ENCODE measurements at regions of chr19 and their contacts with region 1.

Region 1: DNA sequence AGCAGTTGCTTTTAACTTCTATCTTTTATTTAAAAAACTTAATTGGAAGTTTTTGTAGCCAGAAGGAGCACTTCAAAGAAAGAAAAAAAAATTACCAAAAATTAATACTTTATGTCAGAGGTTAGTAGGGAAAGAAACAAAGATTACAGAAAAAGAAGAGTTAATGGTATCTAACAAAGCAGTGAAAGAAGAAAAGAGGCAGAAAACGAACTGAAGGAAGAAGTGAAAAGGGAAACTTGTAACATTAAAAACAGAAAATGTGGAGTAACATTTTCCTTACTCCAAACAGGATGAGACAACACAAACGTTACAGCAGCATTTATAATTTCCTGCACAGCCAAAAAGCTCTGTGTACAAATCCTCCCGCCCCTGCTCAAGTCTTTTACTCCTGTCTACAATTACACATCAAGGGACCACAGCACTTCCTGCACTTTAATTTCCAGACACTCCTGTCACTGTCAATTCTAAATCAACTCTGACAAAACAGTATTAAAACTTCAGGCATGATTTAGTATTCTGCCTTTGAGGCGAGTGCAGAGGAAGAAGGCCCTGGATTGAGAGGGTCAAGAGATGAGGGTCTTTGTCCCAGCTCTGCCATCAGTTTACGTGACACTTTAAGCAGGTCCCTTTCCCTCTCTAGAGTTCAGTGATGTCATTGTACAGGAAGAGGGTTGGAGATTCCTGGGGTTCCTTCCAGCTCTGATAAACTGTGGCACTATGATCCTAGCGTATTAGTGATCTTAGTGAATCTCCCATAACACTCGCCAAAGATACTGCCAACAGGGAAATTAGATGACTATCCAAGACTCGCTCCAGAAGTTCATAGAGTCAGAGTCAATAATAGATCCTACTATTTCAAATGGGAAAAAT is 53.2 kb upstream of the LSM14A start:
- DNase-seq: peak; percentile 30
- H3K4me3 ChIP-seq: no peak overlapping the region
- H3K27ac ChIP-seq: no peak overlapping the region
- H3K4me1 ChIP-seq: peaks cover 8% of the 10 kb centered on the region
- H3K27me3 ChIP-seq: no peaks in the 10 kb centered on the region
- CTCF ChIP-seq: no peak

Region 2: DNA sequence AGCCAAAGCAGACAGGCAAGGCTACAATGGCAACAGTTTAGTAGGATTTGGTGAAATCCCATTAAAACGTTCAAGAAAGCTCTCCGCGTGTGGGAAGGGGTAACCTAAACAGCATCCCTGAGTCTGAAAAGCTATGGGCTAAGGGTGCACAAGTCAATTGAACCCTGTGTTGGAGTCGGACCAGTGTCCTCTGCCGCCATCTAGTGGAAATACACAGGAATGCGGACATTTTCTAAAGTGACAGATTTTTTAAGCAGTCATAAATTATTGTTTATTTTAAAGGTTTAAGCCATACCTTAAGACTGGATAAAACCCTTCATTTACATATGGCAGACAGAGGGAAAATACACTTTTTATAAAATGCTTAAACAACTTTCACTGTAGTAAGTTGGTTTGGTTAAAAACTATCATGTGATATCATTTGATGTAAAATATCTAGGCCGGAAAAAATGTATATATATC is 26.7 kb after region 1 on chr19:
- CTCF ChIA-PET with region 1: interaction called, 4 read pairs
- POLR2A ChIA-PET with region 1: no interaction called
- intact Hi-C with region 1: loop called (anchors 1 kb)
- DNase-seq: peak; percentile 72
- H3K4me3 ChIP-seq: no peak overlapping the region
- H3K27ac ChIP-seq: no peak overlapping the region
- H3K4me1 ChIP-seq: no peaks in the 10 kb centered on the region
- H3K27me3 ChIP-seq: no peaks in the 10 kb centered on the region
- CTCF ChIP-seq: peak; percentile 87